GM12878 (cell line): ENCODE measurements at regions of chr2 and their contacts with region 1.

Region 1: DNA sequence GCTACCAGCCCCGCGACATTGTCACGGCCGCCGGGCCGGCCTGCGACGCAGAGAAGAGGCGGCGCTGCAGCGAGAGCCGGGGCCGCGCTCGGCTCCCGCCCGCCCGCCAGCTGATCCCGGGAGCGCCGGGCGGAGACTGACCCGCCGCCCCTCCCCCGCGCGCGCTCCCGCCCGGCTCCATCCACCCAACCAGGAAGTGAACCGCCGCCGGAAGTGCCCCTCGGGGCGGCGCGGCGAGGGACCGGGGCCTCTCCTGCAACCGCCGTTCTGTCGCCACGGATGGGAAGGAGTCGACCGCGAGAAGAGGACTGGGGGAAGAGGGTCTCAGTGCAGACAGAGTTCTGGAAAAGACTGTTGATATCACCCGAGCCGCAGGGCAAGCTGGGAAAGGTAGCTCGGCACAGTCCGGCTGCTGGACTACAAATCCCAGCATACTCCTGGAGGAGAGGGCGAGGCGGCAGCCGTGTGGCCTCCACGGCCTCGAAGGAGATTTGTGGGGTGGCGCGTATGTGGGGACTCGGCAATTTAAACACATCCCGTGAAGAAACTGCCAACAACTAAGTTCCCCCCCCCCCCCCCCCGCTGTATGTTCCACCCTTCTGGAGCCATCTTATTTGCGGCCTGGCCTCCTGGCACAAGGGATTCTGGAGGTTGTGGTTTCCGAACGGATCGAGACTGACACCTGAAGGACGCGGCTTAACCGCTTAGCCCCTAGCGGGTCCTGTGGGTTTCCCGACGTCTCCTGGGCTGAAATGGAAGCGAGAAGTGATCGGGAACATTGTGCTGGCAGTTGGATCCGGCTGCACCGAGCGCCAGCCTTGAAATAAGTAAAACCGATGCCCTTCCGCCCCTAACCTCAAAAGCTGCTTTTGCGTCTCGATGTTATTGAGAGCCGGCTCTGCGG is at the start of gene AAK1:
- DNase-seq: peak; percentile 68
- ATAC-seq: peak; percentile 69
- H3K4me3 ChIP-seq: peak within 1 kb of the TSS; percentile 85
- H3K27ac ChIP-seq: peak within 1 kb of the TSS; percentile 94
- H3K4me1 ChIP-seq: peaks cover 28% of the 10 kb centered on the region
- H3K27me3 ChIP-seq: no peaks in the 10 kb centered on the region
- CTCF ChIP-seq: 0 out of 6 replicates have a peak, but pooled peaks of 2 of the 3 experiments have one; percentile 0 to 2
- EP300 ChIP-seq: no peak
- POLR2A ChIP-seq: peak; percentile 93
- RAD21 ChIP-seq: no peak
- polyA plus RNA-seq, gene AAK1: 2.9 to 8.0 TPM

Region 2: DNA sequence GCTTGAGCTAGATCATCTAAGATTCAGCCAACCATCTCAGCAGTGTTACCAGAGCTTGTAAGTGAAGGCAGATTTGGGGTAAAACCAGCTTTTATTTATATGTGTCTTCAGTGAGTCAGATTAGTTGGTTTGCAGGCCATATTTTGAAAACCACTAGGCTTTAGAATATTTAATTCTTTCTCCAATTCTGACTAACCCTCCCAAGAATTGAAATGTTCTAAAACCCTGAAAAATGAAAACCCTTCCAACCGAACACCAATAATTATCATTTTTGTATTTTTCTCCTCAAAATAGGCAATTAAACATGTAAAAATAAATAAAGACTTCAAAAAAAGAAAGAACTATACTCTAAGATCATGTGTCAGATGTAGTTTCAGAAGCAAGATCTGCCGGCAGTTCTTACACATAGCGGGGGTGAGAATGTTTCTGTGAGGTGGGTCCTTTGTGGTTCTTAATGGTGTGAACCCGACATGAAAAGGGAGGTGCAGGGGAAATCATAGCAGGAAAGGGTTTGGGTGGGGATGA is 1264.6 kb before region 1 on chr2:
- CTCF ChIA-PET with region 1: no interaction called
- POLR2A ChIA-PET with region 1: no interaction called
- RAD21 ChIA-PET with region 1: no interaction called
- SMC1A ChIA-PET with region 1: no interaction called
- in situ Hi-C with region 1: no loop called
- intact Hi-C with region 1: loop called (anchors 10 kb)
- DNase-seq: no peak
- ATAC-seq: peak; percentile 55
- H3K4me3 ChIP-seq: peak overlapping the region; percentile 48; the same call in 1 of the 2 replicates
- H3K27ac ChIP-seq: peak overlapping the region; percentile 80
- H3K4me1 ChIP-seq: peaks cover 71% of the 10 kb centered on the region
- H3K27me3 ChIP-seq: no peaks in the 10 kb centered on the region
- CTCF ChIP-seq: no peak
- EP300 ChIP-seq: peak; percentile 60 to 73; a peak in 3 of 4 replicates
- POLR2A ChIP-seq: no peak
- RAD21 ChIP-seq: no peak

Region 3: DNA sequence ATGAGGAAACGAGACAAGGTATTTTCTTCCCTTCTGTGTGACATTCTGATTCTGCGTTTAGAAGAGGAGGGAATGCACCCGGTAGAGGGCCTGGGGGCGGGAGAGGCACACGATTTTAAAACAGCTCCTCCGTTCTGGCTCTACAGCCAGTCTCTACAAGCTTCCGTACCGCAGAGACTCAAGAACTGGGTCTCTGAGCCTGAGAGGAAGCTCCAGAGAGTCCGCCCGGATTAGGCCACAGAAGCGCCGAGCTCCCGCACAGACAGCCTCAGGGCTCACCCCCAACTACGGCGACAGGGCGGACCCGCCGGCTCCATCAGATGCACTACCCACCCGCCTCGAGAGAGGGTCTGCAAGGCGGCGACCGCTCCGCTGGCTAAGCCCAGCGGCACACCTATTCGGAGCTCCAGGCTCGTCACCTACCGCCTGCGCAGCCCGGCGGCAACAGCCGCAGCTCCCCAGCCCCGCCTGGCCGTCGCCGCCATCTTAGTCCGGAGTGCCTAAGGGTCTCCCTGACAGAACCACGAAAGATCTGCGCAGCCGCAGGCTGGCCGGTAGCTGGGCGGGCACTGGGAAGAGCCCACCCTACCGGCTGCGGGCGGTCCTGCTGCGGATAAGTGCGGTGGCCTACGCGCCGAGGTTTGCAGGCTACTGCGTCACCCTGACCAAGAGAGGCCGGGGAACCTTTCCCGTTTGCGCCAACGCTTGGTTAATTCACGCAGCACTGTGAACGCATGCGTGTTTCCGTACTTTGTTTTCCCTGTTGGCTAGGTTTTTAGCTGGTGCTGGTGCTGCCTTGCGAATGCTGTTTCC is 206.7 kb before region 1 on chr2 and contains the start of gene NFU1:
- CTCF ChIA-PET with region 1: interaction called, 3 read pairs
- POLR2A ChIA-PET with region 1: interaction called, 7 read pairs
- RAD21 ChIA-PET with region 1: interaction called, 3 read pairs
- SMC1A ChIA-PET with region 1: no interaction called
- in situ Hi-C with region 1: no loop called
- intact Hi-C with region 1: loop called (anchors 2 kb)
- DNase-seq: peak; percentile 79
- ATAC-seq: peak; percentile 97
- H3K4me3 ChIP-seq: peak within 1 kb of the TSS; percentile 76
- H3K27ac ChIP-seq: peak within 1 kb of the TSS; percentile 89
- H3K4me1 ChIP-seq: peaks cover 9% of the 10 kb centered on the region; the same call in 1 of the 2 replicates
- H3K27me3 ChIP-seq: no peaks in the 10 kb centered on the region
- CTCF ChIP-seq: peak; percentile 61 to 76 (median 63)
- EP300 ChIP-seq: peak; percentile 21 to 73; a peak in 2 of 4 replicates
- POLR2A ChIP-seq: peak; percentile 98
- RAD21 ChIP-seq: peak; percentile 24; the same call in 1 of the 2 replicates
- polyA plus RNA-seq, gene NFU1: 38.5 to 61.2 TPM

Region 4: DNA sequence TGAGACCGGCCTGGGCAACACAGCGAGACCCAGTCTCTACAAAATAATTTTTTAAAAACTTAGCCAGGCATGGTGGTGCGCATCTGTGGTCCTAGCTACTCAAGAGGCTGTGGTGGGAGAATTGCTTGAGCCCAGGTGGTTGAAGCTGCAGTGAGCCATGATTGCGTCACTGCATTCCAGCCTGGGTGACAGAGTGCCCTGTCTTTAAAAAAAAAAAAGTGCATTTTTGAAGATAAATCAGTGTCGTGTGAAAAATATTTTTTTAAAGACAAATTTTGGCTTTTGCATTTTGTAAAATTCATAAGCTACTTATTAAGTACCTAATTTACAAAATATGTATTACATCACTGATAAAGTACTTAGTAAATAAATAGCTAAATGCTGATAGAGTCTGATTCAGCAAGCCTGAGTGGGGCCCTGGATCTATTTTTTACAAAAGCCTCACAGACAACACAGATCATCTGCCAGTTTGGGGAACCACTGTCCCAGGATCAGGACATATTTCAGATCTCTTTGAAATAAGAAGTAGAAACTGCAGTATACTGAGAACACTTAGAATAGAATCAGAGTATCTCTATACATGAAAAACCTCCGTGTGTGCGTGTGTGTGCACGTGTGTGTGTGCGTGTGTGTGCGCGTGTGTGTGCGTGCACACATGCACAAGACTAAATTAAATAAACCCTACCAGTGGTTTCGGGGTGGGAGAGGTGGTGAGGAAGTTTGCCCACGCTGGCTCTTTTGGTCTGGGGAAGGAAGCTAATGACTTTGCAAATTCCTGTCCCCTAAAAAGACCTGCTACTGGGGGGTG is 61.9 kb before region 1 on chr2:
- CTCF ChIA-PET with region 1: interaction called, 5 read pairs
- POLR2A ChIA-PET with region 1: interaction called, 12 read pairs
- RAD21 ChIA-PET with region 1: interaction called, 28 read pairs
- SMC1A ChIA-PET with region 1: interaction called, 25 read pairs
- in situ Hi-C with region 1: no loop called
- intact Hi-C with region 1: loop called (anchors 5 kb)
- DNase-seq: peak; percentile 40
- ATAC-seq: peak; percentile 64
- H3K4me3 ChIP-seq: peak overlapping the region; percentile 44; the same call in 1 of the 2 replicates
- H3K27ac ChIP-seq: peak overlapping the region; percentile 28
- H3K4me1 ChIP-seq: peaks cover 28% of the 10 kb centered on the region
- H3K27me3 ChIP-seq: no peaks in the 10 kb centered on the region
- CTCF ChIP-seq: no peak
- EP300 ChIP-seq: no peak
- POLR2A ChIP-seq: no peak
- RAD21 ChIP-seq: no peak

Region 5: GRCh38 chr2:69628325-69629021 is 15.4 kb before region 1 on chr2:
- CTCF ChIA-PET with region 1: interaction called, 22 read pairs
- POLR2A ChIA-PET with region 1: interaction called, 4 read pairs
- RAD21 ChIA-PET with region 1: interaction called, 7 read pairs
- SMC1A ChIA-PET with region 1: interaction called, 11 read pairs
- in situ Hi-C with region 1: no loop called
- intact Hi-C with region 1: no loop called
- DNase-seq: no peak
- ATAC-seq: peak; percentile 62
- H3K4me3 ChIP-seq: no peak overlapping the region
- H3K27ac ChIP-seq: no peak overlapping the region
- H3K4me1 ChIP-seq: peaks cover 11% of the 10 kb centered on the region
- H3K27me3 ChIP-seq: no peaks in the 10 kb centered on the region
- CTCF ChIP-seq: no peak
- EP300 ChIP-seq: no peak
- POLR2A ChIP-seq: no peak
- RAD21 ChIP-seq: no peak

Region 6: DNA sequence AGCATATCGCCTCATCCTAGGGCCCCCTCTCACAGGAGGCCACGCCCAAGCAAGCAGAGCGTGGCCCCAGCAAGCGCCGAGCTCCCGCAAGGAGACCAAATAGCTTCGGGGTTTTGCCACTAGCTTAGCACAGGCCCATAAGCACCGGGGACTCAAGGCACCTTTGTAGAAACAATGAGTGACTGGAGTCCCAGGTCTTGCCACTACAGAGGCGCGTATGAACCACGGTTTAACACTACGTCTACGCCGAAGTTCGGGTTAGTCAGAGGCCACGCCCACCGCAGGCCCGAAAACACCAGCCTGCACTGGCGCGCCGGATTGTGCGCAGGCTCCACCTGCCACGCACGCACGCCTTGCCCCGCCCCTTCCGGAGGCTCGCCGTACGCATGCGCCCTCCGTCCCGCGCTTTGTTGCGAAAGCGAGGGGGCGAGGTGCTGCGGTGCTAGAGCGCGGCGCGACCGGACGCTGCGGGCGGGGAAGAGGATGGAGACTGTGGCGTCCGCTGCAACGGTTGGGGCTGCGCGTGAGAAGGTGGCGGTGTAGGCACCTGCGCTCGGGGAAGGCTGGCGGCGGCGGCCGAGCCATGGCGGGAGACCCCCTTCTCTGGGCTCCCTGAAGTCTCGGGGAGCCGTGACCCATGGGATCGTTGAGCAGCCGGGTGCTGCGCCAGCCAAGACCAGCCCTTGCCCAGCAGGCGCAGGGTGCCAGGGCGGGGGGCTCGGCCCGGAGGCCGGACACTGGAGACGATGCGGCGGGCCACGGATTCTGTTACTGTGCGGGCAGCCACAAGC is 185.6 kb after region 1 on chr2 and contains the start of gene GMCL1:
- CTCF ChIA-PET with region 1: no interaction called
- POLR2A ChIA-PET with region 1: no interaction called
- RAD21 ChIA-PET with region 1: no interaction called
- SMC1A ChIA-PET with region 1: no interaction called
- in situ Hi-C with region 1: no loop called
- intact Hi-C with region 1: loop called (anchors 5 kb)
- DNase-seq: peak; percentile 92
- ATAC-seq: peak; percentile 94
- H3K4me3 ChIP-seq: peak within 1 kb of the TSS; percentile 87
- H3K27ac ChIP-seq: peak within 1 kb of the TSS; percentile 93
- H3K4me1 ChIP-seq: peaks cover 3% of the 10 kb centered on the region
- H3K27me3 ChIP-seq: no peaks in the 10 kb centered on the region
- CTCF ChIP-seq: no peak
- EP300 ChIP-seq: no peak
- POLR2A ChIP-seq: peak; percentile 93
- RAD21 ChIP-seq: no peak
- polyA plus RNA-seq, gene GMCL1: 3.7 to 4.8 TPM